Heart left ventricle (tissue), 16 donors: ENCODE measurements at regions of chr19 and their contacts with region 1.

Region 1: DNA sequence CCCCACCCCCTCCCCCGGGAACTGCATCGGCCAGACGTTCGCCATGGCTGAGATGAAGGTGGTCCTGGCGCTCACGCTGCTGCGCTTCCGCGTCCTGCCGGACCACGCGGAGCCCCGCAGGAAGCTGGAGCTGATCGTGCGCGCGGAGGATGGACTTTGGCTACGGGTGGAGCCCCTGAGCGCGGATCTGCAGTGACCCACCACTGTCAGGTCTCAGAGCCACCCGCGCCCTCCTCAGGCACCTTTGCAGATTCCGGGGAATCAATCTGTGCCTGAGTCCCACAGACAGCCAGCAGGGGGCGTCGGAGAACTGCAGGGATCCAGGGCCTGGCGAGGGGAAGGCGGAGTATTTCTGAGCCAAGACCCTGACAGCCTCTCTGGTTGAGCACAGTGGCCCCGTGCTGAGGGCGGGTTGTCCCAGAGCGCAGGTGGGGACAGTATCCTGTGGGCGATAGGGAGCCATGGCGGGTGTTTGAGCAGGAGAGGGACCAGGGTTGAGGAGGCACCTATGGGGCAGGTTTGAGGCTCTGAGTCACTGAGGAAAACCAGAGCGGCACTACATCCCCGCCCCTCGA is 30.4 kb upstream of the CYP4F8 start:
- DNase-seq: peak; percentile 62 to 91 (median 80)
- ATAC-seq: peak; percentile 64 to 83 (median 80)
- H3K4me3 ChIP-seq: no peak overlapping the region
- H3K27ac ChIP-seq: no peak overlapping the region
- H3K4me1 ChIP-seq: peaks cover 0 to 5% (median 0%) of the 10 kb centered on the region in 12 donors
- H3K27me3 ChIP-seq: peaks cover 0 to 48% (median 14%) of the 10 kb centered on the region in 9 donors
- CTCF ChIP-seq: peak; percentile 78 to 90 (median 86)
- POLR2A ChIP-seq: no peak

Region 2: GRCh38 chr19:15869109-15869555 is 284.5 kb after region 1 on chr19:
- intact Hi-C with region 1: loop called in 2 of 10 experiments (anchors 2 to 5 kb)
- DNase-seq: no peak
- ATAC-seq: peak in 2 of 4 donors; percentile 64 to 75
- H3K4me3 ChIP-seq: no peak overlapping the region
- H3K27ac ChIP-seq: no peak overlapping the region
- H3K4me1 ChIP-seq: no peaks in the 10 kb centered on the region
- H3K27me3 ChIP-seq: peaks cover 0 to 46% (median 9%) of the 10 kb centered on the region in 9 donors
- CTCF ChIP-seq: peak; percentile 47 to 62 (median 55)
- POLR2A ChIP-seq: no peak

Region 3: GRCh38 chr19:16185123-16185767 is 600.6 kb after region 1 on chr19 and contains the start of gene FAM32A:
- intact Hi-C with region 1: loop called in 2 of 10 experiments (anchors 2 to 5 kb)
- DNase-seq: peak; percentile 99
- ATAC-seq: peak; percentile 94 to 99 (median 98)
- H3K4me3 ChIP-seq: peak within 1 kb of the TSS; percentile 66 to 99 (median 91)
- H3K27ac ChIP-seq: peak within 1 kb of the TSS; percentile 72 to 92 (median 82)
- H3K4me1 ChIP-seq: peaks cover 3 to 41% (median 16%) of the 10 kb centered on the region in 12 donors
- H3K27me3 ChIP-seq: peaks cover 0 to 9% (median 0%) of the 10 kb centered on the region in 9 donors
- CTCF ChIP-seq: peak in 10 of 12 donors; percentile 7 to 51 (median 25)
- POLR2A ChIP-seq: peak in 1 of 2 donors; percentile 74
- total RNA-seq, gene FAM32A: 32.0 to 71.8 (median 37.5) TPM